ENCODE measurements at regions of chr2 and their contacts with region 1.

Region 1: DNA sequence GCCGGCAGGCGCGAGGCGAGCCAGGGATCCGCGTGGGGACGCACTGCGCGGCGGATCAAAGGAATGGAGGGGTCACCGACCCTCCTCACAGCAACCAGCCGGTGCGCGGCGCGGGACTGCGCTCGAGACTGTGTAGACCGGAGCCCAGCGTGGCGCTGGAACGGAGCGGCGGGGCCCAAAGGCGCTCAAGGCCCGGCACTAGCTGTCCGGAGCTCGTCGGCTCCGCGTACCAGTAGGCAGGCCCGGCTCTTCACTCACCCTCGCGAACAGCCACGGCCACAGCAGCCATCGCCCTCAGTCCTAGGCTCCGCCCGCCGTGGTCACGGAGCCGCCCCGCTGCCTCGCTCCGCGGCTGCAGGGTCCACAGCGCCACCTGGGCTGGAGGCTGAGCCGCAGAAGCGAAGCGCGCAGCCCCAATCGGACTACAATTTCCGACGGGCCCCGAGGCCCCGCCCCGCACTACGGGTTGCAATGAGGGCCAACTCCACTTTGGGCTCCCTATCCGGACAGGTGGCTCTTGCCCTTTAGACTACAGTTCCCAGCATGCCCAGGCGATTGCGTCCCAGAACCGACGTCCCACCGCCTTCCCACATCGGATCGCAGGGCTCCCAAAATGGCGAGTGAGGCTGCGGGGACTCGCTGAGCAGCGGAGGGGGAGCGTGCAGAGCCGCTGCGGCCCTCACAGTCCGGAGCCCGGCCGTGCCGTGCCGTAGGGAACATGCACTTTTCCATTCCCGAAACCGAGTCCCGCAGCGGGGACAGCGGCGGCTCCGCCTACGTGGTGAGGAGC is at the starts of genes EIF2B4 and SNX17:
- DNase-seq: peak; percentile 99
- H3K4me3 ChIP-seq: peak within 1 kb of the TSS; percentile 71 to 82
- H3K27ac ChIP-seq: peak within 1 kb of the TSS; percentile 83 to 91
- H3K4me1 ChIP-seq: peaks cover 19% of the 10 kb centered on the region
- H3K27me3 ChIP-seq: no peaks in the 10 kb centered on the region
- CTCF ChIP-seq: peak; percentile 54 to 94 (median 80)
- POLR2A ChIP-seq: peak; percentile 60
- total RNA-seq, gene EIF2B4: 46.9 to 51.8 TPM
- total RNA-seq, gene SNX17: 127 to 134 TPM

Region 2: DNA sequence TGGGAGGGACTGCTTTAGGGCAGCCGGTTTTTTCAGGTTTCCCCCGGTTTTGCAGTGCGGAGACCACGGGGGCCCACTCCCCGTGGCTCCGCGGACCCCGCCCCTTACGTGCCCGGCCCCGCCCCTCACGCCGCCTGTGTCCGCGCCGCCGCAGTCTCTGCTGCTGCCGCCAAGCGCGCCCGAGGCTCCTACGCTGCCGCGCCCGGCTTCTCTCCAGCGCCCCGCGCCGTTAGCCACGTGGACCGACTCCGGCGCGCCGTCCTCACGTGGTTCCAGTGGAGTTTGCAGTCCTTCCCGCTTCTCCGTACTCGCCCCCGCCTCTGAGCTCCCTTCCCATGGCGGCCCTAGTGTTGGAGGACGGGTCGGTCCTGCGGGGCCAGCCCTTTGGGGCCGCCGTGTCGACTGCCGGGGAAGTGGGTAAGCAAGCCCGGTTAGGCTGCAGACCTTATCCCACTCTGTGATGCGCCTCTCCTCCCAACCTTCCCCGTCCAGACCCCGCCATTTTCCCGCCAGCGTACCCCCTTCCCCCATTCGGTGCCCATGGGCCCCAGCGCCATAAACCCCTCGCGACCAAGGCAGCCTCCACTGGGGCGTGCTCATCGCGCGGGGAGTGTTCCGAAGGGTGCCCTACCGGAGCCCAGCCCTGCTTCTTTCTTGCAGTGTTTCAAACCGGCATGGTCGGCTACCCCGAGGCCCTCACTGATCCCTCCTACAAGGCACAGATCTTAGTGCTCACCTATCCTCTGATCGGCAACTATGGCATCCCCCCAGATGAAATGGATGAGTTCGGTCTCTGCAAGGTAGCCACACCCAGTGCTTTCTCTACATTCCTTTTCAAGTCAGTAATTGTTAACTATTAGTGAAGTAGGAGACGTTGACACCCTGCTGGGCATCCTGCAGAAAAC is 152.8 kb before region 1 on chr2 and contains the start of gene CAD:
- intact Hi-C with region 1: loop called (anchors 10 kb)
- DNase-seq: peak; percentile 78
- H3K4me3 ChIP-seq: peak within 1 kb of the TSS; percentile 49 to 56
- H3K27ac ChIP-seq: peak within 1 kb of the TSS; percentile 43 to 59
- H3K4me1 ChIP-seq: peaks cover 3% of the 10 kb centered on the region
- H3K27me3 ChIP-seq: no peaks in the 10 kb centered on the region
- CTCF ChIP-seq: peak in 2 of 4 experiments; percentile 35 to 58
- POLR2A ChIP-seq: no peak
- total RNA-seq, gene CAD: 16.0 to 63.6 TPM

Region 3: GRCh38 chr2:27322766-27323595 is 47.2 kb before region 1 on chr2 and contains the start of gene MPV17:
- intact Hi-C with region 1: loop called (anchors 5 kb)
- DNase-seq: peak; percentile 92
- H3K4me3 ChIP-seq: peak within 1 kb of the TSS; percentile 61 to 64
- H3K27ac ChIP-seq: peak within 1 kb of the TSS; percentile 87 to 92
- H3K4me1 ChIP-seq: peaks cover 10% of the 10 kb centered on the region
- H3K27me3 ChIP-seq: no peaks in the 10 kb centered on the region
- CTCF ChIP-seq: no peak
- POLR2A ChIP-seq: peak; percentile 84
- total RNA-seq, gene MPV17: 82.5 to 90.3 TPM